Activated CD8-positive, alpha-beta T cell treated with anti-CD3 and anti-CD28 coated beads for 36 hours (primary cell): ENCODE measurements at regions of chr20 and their contacts with region 1.

Region 1: DNA sequence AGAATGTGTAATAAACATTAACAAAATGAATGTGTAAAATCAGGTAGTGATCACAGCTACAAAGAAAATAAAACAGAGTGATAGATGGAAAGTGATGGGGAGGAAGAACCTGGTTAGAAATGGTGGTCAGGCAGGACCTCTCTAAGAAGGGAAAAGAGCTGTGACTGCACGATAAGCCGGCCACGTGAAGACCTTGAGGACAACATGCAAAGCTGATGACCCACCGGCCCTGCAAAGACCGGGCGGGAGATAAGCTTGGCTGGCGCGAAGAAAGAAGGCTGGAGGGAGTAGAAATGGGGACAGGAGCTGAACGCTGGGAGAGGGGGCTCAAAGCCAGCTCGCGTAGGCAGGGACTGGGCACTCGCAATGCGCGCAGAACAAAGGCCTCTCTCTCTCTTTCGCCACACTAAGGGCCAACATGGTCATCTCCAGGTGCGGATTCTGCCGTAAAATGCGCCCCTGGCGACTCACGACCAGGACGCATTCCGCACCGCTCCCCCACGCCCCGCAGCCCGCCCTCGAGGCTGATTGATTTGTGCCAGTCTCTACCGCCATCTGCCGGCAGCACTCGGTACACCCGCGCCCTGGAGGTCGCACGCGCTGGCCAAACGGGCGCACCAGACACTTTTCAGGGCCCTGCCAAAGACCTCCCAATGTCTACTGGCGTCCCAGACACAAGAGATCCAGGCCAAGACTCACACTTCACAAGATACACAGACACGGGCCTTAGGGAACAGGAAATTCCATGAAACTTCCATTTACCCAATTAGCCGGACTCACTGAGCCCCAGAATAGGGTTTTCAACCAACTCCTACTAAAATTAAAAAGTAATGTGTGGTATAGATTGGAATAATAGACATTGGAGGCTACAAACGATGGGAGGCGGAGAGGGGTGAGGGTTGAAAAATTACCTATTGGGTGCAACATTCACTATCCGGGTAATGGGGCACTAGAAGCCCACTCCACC is 9.4 kb downstream of the DEFB132 start:
- DNase-seq: peak; percentile 96
- ATAC-seq: peak; percentile 99
- H3K4me3 Mint-ChIP-seq: peak overlapping the region; percentile 71
- H3K27ac Mint-ChIP-seq: peak overlapping the region; percentile 30
- H3K4me1 Mint-ChIP-seq: peaks cover 10% of the 10 kb centered on the region
- H3K27me3 Mint-ChIP-seq: peaks cover 4% of the 10 kb centered on the region
- CTCF ChIP-seq: peak; percentile 95

Region 2: GRCh38 chr20:208942-209566 is 57.8 kb before region 1 on chr20:
- CTCF ChIA-PET with region 1: interaction called, 34 read pairs
- POLR2A ChIA-PET with region 1: no interaction called
- intact Hi-C with region 1: loop called (anchors 2 kb)
- DNase-seq: peak; percentile 28
- ATAC-seq: peak; percentile 89
- H3K4me3 Mint-ChIP-seq: no peak overlapping the region
- H3K27ac Mint-ChIP-seq: no peak overlapping the region
- H3K4me1 Mint-ChIP-seq: no peaks in the 10 kb centered on the region
- H3K27me3 Mint-ChIP-seq: no peaks in the 10 kb centered on the region
- CTCF ChIP-seq: peak; percentile 70

Region 3: GRCh38 chr20:217266-217665 is 49.6 kb before region 1 on chr20:
- CTCF ChIA-PET with region 1: interaction called, 34 read pairs
- POLR2A ChIA-PET with region 1: no interaction called
- intact Hi-C with region 1: no loop called
- DNase-seq: no peak
- ATAC-seq: no peak
- H3K4me3 Mint-ChIP-seq: no peak overlapping the region
- H3K27ac Mint-ChIP-seq: no peak overlapping the region
- H3K4me1 Mint-ChIP-seq: no peaks in the 10 kb centered on the region
- H3K27me3 Mint-ChIP-seq: peaks cover 10% of the 10 kb centered on the region
- CTCF ChIP-seq: no peak

Region 4: DNA sequence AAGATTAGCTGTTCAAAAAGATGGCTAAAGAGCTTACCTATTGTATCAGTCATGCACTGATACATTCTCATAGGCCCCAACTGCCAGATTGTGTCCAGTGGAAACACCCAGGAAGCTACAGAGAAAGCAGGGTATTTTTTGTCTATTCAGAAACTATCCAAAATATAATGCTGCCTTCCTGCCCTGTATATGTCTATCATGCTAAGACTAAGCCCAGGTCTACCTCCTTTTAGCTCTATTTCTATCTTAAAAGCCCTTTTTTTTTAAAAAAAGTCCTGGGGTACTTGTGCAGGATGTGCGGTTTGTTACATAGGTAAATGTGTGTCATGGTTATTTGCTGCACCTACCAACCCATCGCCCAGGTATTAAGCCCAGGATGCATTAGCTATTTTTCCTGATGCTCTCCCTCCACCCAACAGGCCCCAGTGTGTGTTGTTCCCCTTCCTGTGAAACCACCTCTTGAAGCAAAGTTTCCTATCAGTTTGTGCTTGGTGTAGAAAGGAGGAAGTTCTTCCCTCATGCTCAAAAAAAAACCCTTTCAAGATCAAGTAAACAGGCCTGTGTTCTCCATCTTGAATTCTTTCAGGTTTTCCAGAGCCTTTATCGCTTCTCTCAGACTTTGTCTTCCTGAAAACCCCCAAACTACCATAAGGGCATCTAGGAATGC is 39.3 kb before region 1 on chr20:
- CTCF ChIA-PET with region 1: interaction called, 25 read pairs
- POLR2A ChIA-PET with region 1: no interaction called
- intact Hi-C with region 1: no loop called
- DNase-seq: no peak
- ATAC-seq: peak; percentile 60
- H3K4me3 Mint-ChIP-seq: no peak overlapping the region
- H3K27ac Mint-ChIP-seq: peak overlapping the region; percentile 30
- H3K4me1 Mint-ChIP-seq: peaks cover 18% of the 10 kb centered on the region
- H3K27me3 Mint-ChIP-seq: peaks cover 2% of the 10 kb centered on the region
- CTCF ChIP-seq: no peak

Region 5: DNA sequence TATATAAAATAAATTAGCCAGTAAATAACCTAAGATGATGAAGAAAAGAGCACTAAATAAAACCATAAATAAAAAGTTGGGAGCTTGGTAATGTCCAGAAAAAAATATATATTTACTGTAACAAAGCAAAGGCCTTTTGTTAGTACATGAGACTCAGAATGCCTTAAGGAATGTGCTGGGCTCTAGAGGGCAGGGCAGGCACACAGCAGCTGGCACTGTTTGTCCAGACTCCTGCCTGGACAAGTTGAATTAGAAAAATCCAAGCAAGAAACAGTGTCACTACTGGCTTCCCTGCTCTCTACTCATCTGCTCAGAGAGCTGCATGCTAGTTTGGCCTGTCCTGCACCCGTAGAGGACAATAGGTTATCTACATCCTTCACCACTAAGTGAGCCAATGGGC is 31.0 kb before region 1 on chr20:
- CTCF ChIA-PET with region 1: interaction called, 18 read pairs
- POLR2A ChIA-PET with region 1: interaction called, 4 read pairs
- intact Hi-C with region 1: no loop called
- DNase-seq: no peak
- ATAC-seq: no peak
- H3K4me3 Mint-ChIP-seq: no peak overlapping the region
- H3K27ac Mint-ChIP-seq: no peak overlapping the region
- H3K4me1 Mint-ChIP-seq: peaks cover 14% of the 10 kb centered on the region
- H3K27me3 Mint-ChIP-seq: no peaks in the 10 kb centered on the region
- CTCF ChIP-seq: no peak